Ovary (tissue), 10 donors: ENCODE measurements at regions of chr9 and their contacts with region 1.

Region 1: DNA sequence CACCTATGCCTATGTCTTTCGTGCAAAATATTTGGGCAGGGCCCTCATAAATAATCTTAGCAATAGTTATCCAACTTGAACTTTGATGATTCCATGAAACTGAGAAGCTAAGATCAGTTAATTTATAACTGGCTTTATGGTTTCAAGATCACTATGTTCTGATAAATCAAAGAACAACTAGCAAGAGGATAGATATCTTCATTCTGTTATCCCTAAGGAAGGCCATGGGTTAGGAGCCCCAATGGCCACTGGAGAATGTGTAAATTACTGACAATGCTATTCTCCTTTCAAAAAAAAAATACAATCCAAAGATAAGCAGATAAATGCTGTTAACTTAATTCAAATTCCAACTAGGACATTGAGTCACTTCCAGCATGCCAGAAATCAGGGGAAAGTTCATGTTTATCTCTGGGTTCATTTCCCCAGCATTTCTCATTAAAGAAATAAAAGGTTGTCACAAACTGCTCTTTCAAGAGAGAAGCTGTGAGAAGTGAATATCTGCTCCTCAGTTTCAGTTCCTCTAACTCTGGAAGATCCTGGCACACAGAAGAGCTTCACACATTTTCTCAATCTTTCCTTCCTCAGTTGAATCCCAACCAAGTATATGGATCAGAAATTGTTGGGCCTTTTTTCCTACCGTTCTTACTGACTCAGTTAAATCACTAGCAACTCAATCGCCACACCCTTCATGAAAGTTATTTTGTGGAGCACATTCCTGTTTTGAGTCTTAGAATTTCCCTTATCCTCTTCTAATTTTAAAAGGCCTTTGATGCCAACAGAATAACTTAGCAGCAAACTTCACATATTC is 59.6 kb upstream of the SLC1A1 start:
- DNase-seq: no peak
- H3K4me3 ChIP-seq: no peak overlapping the region
- H3K27ac ChIP-seq: no peak overlapping the region
- H3K4me1 ChIP-seq: no peaks in the 10 kb centered on the region
- H3K27me3 ChIP-seq: no peaks in the 10 kb centered on the region
- CTCF ChIP-seq: no peak
- EP300 ChIP-seq: no peak
- POLR2A ChIP-seq: no peak

Region 2: DNA sequence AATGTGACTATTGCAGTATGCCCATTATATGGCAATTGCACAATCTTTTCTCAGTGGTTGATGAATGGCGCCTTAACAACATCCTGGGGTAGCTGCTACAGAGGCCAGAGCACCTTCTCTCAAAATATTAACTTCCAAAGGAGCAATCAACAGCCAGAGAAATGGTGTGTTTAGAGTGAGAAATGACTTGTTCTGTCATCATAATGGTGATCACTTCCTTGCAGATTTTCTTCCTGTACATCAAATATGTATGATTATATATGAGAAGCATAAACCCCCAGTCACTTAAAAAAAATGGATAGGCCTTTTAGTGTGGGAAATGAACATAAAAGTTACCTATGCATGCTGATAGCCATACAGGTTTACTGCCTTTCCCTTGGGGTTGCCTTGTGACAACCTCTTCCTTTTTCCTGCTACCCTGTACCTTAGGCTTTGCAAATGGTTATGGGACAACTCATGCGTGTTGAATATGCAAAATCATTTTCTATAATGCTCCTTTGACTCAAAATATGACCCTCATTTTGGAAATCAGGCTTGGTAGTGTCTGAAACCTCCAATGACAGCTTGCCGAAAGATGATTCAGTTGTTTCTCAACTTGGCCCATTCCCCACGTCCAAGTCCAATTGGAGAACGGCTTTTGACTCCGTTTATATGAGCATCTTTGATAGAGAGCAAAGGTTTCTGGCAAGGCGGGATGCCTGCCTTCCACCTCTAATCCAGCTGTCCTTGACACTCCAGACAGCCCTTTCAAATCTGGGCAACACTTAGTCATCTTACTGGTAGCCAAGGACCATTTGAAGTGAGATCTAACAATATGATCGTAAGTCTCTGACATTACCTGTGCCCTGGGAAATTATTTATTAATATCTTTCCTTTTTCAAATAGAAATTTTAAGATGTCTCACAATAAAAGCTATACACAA is 128.9 kb after region 1 on chr9:
- intact Hi-C with region 1: loop called in 1 of 4 experiments (anchors 1 kb)
- DNase-seq: no peak
- H3K4me3 ChIP-seq: no peak overlapping the region
- H3K27ac ChIP-seq: no peak overlapping the region
- H3K4me1 ChIP-seq: no peaks in the 10 kb centered on the region
- H3K27me3 ChIP-seq: no peaks in the 10 kb centered on the region
- CTCF ChIP-seq: no peak
- EP300 ChIP-seq: no peak
- POLR2A ChIP-seq: no peak